ENCODE measurements at regions of chr1 and their contacts with region 1.

Region 1: DNA sequence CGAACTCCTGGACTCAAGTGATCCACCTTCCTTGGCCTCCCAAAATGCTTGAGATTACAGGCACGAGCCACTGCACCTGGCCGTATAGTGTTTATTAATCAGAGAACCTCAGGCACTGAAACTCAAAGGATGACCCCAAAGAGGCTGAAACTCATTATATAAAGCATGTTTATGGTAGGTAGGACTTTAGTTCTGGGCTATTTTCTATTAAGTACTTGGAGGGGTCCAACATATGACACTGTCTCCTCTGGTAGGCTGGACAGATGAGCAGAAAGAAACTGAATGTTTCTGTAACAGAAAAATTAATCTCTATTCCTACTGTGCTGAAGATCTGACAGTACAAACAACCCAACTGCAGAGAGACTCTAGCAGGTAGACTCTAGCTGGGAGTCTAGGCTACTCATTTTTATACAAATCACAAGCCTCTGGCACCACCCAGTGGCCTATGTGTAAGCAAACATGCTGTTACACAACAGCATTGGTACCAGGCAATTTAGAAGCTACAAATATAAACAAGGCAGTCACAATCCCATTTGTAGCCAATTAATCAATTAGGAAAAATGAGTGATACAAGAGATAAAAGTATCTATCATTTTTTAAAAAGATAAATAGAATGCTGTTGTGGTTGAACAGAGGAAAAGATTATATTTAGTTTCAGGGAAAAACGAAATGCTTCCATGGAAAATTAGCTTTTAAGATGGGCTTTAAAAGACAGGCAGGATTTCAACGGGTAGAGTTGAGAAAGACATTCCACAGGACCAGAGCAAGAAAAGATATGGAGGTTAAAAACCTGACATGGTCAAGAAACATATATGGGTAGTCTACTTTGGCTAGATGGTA is 10.4 kb downstream of the DCAF8 start:
- DNase-seq: peak; percentile 63
- ATAC-seq: peak; percentile 99
- H3K4me3 Mint-ChIP-seq: no peak overlapping the region
- H3K27ac Mint-ChIP-seq: peak overlapping the region; percentile 91
- H3K4me1 Mint-ChIP-seq: peaks cover 6% of the 10 kb centered on the region
- H3K27me3 Mint-ChIP-seq: no peaks in the 10 kb centered on the region
- CTCF ChIP-seq: peak; percentile 37; the same call in 1 of the 2 replicates

Region 2: DNA sequence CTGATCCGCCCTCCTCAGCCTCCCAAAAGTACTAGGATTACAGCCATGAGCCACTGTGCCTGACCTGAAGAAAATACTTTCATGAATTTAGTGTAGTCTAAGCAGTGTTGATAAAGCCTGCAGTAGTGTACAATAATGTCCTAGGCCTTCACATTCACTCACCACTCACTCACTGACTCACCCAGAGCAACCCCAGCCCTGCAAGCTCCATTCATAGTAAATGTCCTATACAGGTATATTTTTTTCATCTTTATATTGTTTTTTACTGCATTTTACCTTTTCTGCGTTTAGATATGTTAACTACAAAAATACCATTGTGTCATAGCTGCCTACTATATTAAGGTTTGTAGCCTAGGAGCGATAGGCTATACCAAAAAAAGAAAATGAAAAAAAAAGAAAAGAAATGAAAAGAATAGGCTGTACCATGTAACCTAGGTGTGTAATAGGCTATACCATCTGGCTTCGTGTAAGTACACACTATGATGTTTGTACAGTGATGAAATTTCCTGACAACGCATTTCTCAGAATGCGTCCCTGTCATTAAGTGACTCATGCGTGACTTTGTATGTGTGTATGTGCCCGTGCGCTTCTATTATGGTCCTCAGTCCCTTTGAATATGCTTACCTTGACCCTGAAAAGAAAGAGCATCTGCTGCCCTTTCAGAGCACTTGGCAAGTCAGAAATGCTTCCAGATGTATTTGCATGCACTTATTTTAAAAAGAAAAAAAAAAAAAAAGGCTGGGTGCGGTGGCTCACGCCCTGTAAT is 434.4 kb before region 1 on chr1:
- CTCF ChIA-PET with region 1: no interaction called
- POLR2A ChIA-PET with region 1: no interaction called
- DNase-seq: no peak
- ATAC-seq: no peak
- H3K4me3 Mint-ChIP-seq: no peak overlapping the region
- H3K27ac Mint-ChIP-seq: peak overlapping the region; percentile 63; the same call in 1 of the 2 replicates
- H3K4me1 Mint-ChIP-seq: peaks cover 8% of the 10 kb centered on the region
- H3K27me3 Mint-ChIP-seq: peaks cover under 1% of the 10 kb centered on the region
- CTCF ChIP-seq: no peak

Region 3: GRCh38 chr1:160078512-160079195 is 173.3 kb before region 1 on chr1:
- CTCF ChIA-PET with region 1: interaction called, 17 read pairs
- POLR2A ChIA-PET with region 1: no interaction called
- DNase-seq: peak; percentile 78
- ATAC-seq: peak; percentile 89
- H3K4me3 Mint-ChIP-seq: no peak overlapping the region
- H3K27ac Mint-ChIP-seq: no peak overlapping the region
- H3K4me1 Mint-ChIP-seq: peaks cover 4% of the 10 kb centered on the region
- H3K27me3 Mint-ChIP-seq: peaks cover 82% of the 10 kb centered on the region
- CTCF ChIP-seq: peak; percentile 95

Region 4: GRCh38 chr1:160108888-160109662 is 142.8 kb before region 1 on chr1:
- CTCF ChIA-PET with region 1: interaction called, 109 read pairs
- POLR2A ChIA-PET with region 1: no interaction called
- DNase-seq: no peak
- ATAC-seq: peak; percentile 61
- H3K4me3 Mint-ChIP-seq: no peak overlapping the region; the same call in 1 of the 2 replicates
- H3K27ac Mint-ChIP-seq: peak overlapping the region; percentile 30
- H3K4me1 Mint-ChIP-seq: peaks cover 50% of the 10 kb centered on the region
- H3K27me3 Mint-ChIP-seq: peaks cover 5% of the 10 kb centered on the region; the same call in 1 of the 2 replicates
- CTCF ChIP-seq: peak; percentile 33; the same call in 1 of the 2 replicates

Region 5: DNA sequence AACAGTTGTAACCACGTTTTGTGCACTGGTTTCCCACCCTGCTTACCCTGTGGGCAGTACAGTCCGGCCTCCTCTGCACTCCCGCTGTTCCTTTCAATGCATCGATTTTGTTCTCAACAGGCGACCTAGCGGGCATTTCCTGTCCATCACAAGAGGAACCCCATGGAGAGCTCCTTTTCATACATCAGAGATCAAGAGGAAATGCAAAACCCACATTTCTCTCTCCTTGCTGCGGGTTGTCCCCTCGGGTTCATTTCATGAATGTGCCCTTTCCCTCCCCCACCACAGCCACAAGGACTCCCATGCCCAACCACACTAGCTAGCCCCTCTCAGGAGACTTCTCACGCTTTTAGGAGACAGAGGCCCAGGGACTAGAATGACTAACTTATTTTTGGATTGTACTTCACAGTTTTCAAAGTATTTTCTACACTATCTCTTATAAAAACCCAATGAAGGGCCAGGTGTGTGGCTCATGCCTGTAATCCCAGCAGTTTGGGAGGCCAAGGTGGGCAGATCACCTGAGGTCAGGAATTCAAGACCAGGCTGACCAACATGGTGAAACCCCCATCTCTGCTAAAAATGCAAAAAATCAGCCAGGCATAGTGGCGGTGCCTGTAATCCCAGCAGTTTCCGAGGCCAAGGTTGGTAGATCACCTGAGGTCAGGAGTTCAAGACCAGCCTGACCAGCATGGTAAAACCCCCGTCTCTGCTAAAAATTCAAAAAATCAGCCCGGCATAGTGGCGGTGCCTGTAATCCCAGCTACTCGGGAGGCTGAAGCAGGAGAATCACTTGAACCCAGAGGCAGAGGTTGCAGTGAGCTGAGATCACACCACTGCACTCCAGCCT is 82.1 kb before region 1 on chr1:
- CTCF ChIA-PET with region 1: interaction called, 46 read pairs
- POLR2A ChIA-PET with region 1: no interaction called
- DNase-seq: peak; percentile 75
- ATAC-seq: peak; percentile 78
- H3K4me3 Mint-ChIP-seq: peak overlapping the region; percentile 42
- H3K27ac Mint-ChIP-seq: peak overlapping the region; percentile 94
- H3K4me1 Mint-ChIP-seq: peaks cover 64% of the 10 kb centered on the region
- H3K27me3 Mint-ChIP-seq: peaks cover 25% of the 10 kb centered on the region
- CTCF ChIP-seq: no peak

Region 6: GRCh38 chr1:160211046-160211790 is 40.7 kb before region 1 on chr1:
- CTCF ChIA-PET with region 1: interaction called, 11 read pairs
- POLR2A ChIA-PET with region 1: no interaction called
- DNase-seq: peak; percentile 39
- ATAC-seq: no peak
- H3K4me3 Mint-ChIP-seq: no peak overlapping the region
- H3K27ac Mint-ChIP-seq: no peak overlapping the region
- H3K4me1 Mint-ChIP-seq: peaks cover 50% of the 10 kb centered on the region
- H3K27me3 Mint-ChIP-seq: no peaks in the 10 kb centered on the region
- CTCF ChIP-seq: no peak

Region 7: DNA sequence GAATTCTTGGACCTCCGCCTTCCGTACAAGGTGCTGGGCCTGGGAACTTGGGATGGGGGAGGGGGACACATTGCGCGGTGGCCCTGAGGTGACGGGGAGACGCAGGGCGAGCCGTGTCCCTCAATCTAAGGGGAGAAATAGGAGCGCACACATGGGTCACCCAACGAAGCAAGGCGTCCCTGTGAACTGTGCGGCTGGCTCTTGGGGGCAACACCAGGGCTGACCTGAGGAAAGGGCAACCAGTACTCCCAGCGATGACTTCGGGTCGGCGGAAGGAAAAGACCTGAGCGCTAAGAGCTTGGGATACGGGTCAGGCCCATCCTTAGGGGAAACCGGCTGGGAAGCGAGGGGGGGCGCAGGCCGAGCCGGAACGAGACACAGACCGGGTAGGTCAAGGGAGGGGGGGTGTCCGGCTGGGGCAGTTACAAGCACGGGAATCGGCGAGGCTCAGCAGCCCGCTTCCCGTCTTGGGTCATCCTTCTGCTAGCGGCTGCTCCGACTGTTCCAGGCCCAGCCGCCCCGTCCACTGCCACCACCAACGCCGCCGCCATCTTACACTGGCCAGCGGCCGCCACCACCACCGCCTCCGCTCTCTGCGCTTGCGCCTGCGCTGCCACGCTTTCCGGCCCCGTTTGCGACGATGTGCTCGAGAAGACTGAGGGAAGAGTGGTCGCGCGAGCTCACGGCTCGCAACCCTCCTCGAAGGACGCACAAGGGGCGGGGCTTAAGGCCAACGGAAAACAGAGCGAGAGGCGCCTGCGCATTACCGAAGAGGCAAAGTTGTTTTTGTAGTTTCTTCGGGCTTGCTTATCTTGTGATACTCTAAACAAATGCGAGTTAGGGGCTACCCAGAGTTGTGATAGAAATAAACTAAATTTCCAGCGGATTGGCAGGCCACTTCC is 10.2 kb after region 1 on chr1 and contains the start of gene DCAF8:
- CTCF ChIA-PET with region 1: interaction called, 60 read pairs
- POLR2A ChIA-PET with region 1: interaction called, 5 read pairs
- DNase-seq: peak; percentile 99
- ATAC-seq: peak; percentile 96
- H3K4me3 Mint-ChIP-seq: peak within 1 kb of the TSS; percentile 98
- H3K27ac Mint-ChIP-seq: peak within 1 kb of the TSS; percentile 99
- H3K4me1 Mint-ChIP-seq: peaks cover 32% of the 10 kb centered on the region
- H3K27me3 Mint-ChIP-seq: peaks cover 7% of the 10 kb centered on the region; the same call in 1 of the 2 replicates
- CTCF ChIP-seq: no peak
- total RNA-seq, gene DCAF8: 121 to 143 TPM (median 128 TPM) in 3 replicates

Region 8: GRCh38 chr1:160376525-160377131 is 124.7 kb after region 1 on chr1:
- CTCF ChIA-PET with region 1: interaction called, 36 read pairs
- POLR2A ChIA-PET with region 1: no interaction called
- DNase-seq: no peak
- ATAC-seq: peak; percentile 71
- H3K4me3 Mint-ChIP-seq: peak overlapping the region; percentile 49
- H3K27ac Mint-ChIP-seq: no peak overlapping the region
- H3K4me1 Mint-ChIP-seq: peaks cover 35% of the 10 kb centered on the region
- H3K27me3 Mint-ChIP-seq: no peaks in the 10 kb centered on the region
- CTCF ChIP-seq: peak; percentile 61

Measured in WTC11 (cell line).